ENCODE measurements at regions of chrX and their contacts with region 1.

Region 1: GRCh38 chrX:101595739-101596419 is 21.9 kb downstream of the ARMCX6 start:
- DNase-seq: no peak
- ATAC-seq: peak; percentile 94
- H3K4me3 Mint-ChIP-seq: no peak overlapping the region
- H3K27ac Mint-ChIP-seq: peak overlapping the region; percentile 46
- H3K4me1 Mint-ChIP-seq: peaks cover 6% of the 10 kb centered on the region
- H3K27me3 Mint-ChIP-seq: peaks cover 6% of the 10 kb centered on the region
- CTCF ChIP-seq: no peak

Region 2: DNA sequence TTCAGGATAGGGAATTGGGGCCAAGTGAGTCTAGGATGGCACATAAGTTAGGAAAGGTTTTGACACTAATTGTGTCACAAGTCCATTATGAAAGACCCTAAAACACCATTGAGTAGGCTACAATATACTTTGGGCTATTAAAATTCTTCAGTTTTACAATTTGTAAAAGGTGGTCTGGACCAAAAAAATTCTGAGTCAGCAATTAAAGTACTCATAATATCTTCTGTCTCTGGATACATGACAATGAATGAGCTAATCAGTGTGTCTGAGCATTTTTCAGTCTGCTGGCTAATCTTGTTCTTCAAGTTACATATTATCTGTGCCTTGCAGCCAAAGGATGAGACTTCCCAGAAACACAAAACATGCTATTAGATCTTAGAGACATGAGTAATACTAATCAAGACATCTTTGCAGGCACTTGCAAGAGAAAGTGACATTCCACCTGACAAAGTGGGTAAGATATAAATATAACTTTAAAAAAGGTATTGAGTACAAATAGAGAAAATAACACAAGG is 31.2 kb before region 1 on chrX:
- CTCF ChIA-PET with region 1: no interaction called
- POLR2A ChIA-PET with region 1: no interaction called
- intact Hi-C with region 1: no loop called
- DNase-seq: no peak
- ATAC-seq: no peak
- H3K4me3 Mint-ChIP-seq: no peak overlapping the region
- H3K27ac Mint-ChIP-seq: no peak overlapping the region
- H3K4me1 Mint-ChIP-seq: no peaks in the 10 kb centered on the region
- H3K27me3 Mint-ChIP-seq: peaks cover 2% of the 10 kb centered on the region
- CTCF ChIP-seq: no peak

Region 3: DNA sequence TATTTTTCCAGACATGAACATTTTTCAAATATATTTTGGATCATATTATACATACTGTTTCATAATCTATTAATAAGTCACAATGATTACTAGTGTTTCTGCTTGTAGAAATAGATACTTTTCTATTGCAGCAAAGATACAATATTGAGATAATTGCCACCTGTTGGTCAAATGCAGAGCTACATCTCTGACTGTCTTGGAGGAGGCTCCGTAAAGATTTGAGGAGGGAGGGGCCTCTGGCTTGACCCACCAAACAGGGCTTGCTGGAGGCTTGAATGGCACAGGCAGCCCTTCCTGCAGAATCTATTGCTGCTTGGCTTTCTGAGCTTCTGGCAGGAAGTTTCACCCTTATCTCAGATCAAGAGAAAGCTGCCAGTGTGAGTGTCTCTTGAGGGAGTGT is 163.1 kb after region 1 on chrX:
- CTCF ChIA-PET with region 1: interaction called, 11 read pairs
- POLR2A ChIA-PET with region 1: no interaction called
- intact Hi-C with region 1: loop called (anchors 5 kb)
- DNase-seq: no peak
- ATAC-seq: peak; percentile 62
- H3K4me3 Mint-ChIP-seq: no peak overlapping the region
- H3K27ac Mint-ChIP-seq: no peak overlapping the region
- H3K4me1 Mint-ChIP-seq: no peaks in the 10 kb centered on the region
- H3K27me3 Mint-ChIP-seq: peaks cover 7% of the 10 kb centered on the region
- CTCF ChIP-seq: no peak

Region 4: DNA sequence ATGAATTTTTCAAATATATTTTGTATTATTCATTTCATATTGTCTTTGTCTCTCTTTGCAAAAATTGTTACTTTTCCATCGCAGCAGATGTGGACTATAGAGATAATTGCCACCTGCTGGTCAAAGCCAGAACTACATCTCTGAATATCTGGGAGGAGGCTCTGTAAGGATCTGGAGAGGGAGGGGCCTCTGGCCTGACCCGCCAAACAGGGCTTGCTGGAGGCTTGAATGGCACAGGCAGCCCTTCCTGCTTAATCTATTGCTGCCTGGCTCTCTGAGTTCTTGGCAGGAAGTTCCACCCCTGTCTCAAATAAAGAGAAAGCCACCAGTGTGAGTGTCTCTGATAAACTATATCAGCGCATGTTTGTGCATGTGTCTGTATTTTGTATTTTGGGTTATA is 203.5 kb after region 1 on chrX:
- CTCF ChIA-PET with region 1: interaction called, 4 read pairs
- POLR2A ChIA-PET with region 1: no interaction called
- intact Hi-C with region 1: loop called (anchors 5 kb)
- DNase-seq: peak; percentile 21
- ATAC-seq: peak; percentile 100
- H3K4me3 Mint-ChIP-seq: peak overlapping the region; percentile 50
- H3K27ac Mint-ChIP-seq: no peak overlapping the region
- H3K4me1 Mint-ChIP-seq: no peaks in the 10 kb centered on the region
- H3K27me3 Mint-ChIP-seq: peaks cover 1% of the 10 kb centered on the region
- CTCF ChIP-seq: peak; percentile 27

Region 5: DNA sequence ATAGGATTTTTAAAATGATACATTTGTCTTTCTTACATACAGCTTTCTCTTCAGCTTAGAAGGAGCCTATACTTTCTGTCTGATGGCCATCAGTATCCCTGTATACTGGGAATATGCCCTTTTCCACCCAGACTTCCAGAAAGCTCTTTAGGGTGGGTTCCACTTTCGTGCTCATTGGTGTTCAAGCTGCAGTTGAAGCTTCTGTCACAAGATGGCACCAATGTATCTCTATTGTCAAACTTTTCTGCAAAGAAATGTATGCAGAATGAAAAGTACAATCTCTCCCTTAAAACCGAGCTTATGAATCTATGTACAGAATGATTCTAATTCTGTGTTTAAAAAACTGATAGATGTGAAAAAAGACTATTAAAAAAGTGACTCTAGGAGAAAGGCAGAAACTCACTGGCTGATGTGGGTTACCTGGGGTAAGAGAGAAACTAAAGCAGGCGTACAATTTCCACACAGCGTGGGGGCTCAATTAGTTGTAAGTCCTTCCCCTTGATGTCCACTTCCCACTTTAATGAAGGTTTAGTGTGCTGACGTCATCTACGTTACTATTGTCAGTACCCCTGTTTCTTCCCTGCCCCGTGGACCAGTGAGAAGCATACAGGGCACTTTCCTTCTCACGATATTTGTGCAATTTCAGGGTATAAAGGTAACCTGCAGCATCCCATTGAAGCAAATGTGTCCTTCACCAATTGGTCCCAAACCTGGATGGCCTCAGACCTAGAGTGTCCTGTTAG is 472.3 kb after region 1 on chrX:
- CTCF ChIA-PET with region 1: no interaction called
- POLR2A ChIA-PET with region 1: no interaction called
- intact Hi-C with region 1: loop called (anchors 5 kb)
- DNase-seq: no peak
- ATAC-seq: no peak
- H3K4me3 Mint-ChIP-seq: no peak overlapping the region
- H3K27ac Mint-ChIP-seq: no peak overlapping the region
- H3K4me1 Mint-ChIP-seq: no peaks in the 10 kb centered on the region
- H3K27me3 Mint-ChIP-seq: peaks cover 3% of the 10 kb centered on the region
- CTCF ChIP-seq: no peak

Region 6: GRCh38 chrX:102085706-102086105 is 489.8 kb after region 1 on chrX:
- CTCF ChIA-PET with region 1: no interaction called
- POLR2A ChIA-PET with region 1: no interaction called
- intact Hi-C with region 1: loop called (anchors 5 kb)
- DNase-seq: no peak
- ATAC-seq: no peak
- H3K4me3 Mint-ChIP-seq: no peak overlapping the region
- H3K27ac Mint-ChIP-seq: no peak overlapping the region
- H3K4me1 Mint-ChIP-seq: no peaks in the 10 kb centered on the region
- H3K27me3 Mint-ChIP-seq: no peaks in the 10 kb centered on the region
- CTCF ChIP-seq: no peak

Measured in activated B cell treated with CpG ODN at 0.5 μM for 24 hours (primary cell).